B cell (primary cell): ENCODE measurements at regions of chr13 and their contacts with region 1.

Region 1: DNA sequence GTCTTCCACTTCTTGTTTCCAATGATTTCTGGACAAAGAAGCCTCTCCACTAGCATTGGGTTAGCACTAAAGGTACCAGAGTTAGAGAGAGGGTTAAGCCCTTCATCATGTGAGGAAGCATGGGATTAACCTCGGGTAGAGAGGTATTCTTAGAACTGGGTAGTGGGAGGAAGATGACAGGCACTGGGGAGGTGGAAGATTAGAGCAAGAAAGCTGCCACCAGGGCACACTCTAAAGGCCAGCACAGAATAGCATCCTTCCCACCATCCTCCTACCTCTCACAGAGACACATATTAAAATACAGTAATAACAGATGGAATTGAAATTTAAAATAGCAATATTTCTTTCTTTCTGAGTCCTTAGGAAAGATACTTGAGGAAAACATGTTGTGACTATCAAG is 84.5 kb upstream of the PCDH20 start:
- DNase-seq: no peak
- ATAC-seq: no peak
- H3K4me3 ChIP-seq: no peak overlapping the region
- H3K4me3 Mint-ChIP-seq: no peak overlapping the region
- H3K27ac ChIP-seq: no peak overlapping the region
- H3K27ac Mint-ChIP-seq: no peak overlapping the region
- H3K4me1 ChIP-seq: no peaks in the 10 kb centered on the region
- H3K4me1 Mint-ChIP-seq: no peaks in the 10 kb centered on the region
- H3K27me3 ChIP-seq: no peaks in the 10 kb centered on the region
- H3K27me3 Mint-ChIP-seq: no peaks in the 10 kb centered on the region
- CTCF ChIP-seq: no peak

Region 2: DNA sequence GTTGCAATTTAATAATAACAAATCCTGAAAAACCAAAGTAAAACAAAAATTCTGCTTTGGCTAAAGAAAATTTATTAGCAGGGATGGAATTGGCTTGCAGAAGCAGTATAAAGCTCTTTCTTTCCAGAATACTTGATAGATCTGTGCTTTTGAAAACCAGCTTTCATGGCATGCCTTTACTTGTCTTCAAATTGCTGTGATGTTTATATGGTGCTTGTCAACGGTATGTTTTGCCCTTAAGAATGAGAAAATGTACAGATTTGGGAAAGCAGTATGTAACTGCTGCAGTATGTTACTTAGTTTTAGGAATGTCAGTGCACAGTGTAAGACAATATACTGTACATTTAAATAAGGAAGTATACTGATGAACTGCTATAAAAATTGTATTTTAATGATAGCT is 36.3 kb after region 1 on chr13:
- CTCF ChIA-PET with region 1: no interaction called
- POLR2A ChIA-PET with region 1: no interaction called
- intact Hi-C with region 1: loop called (anchors 1 kb)
- DNase-seq: no peak
- ATAC-seq: no peak
- H3K4me3 ChIP-seq: no peak overlapping the region
- H3K4me3 Mint-ChIP-seq: no peak overlapping the region
- H3K27ac ChIP-seq: no peak overlapping the region
- H3K27ac Mint-ChIP-seq: no peak overlapping the region
- H3K4me1 ChIP-seq: no peaks in the 10 kb centered on the region
- H3K4me1 Mint-ChIP-seq: no peaks in the 10 kb centered on the region
- H3K27me3 ChIP-seq: no peaks in the 10 kb centered on the region
- H3K27me3 Mint-ChIP-seq: no peaks in the 10 kb centered on the region
- CTCF ChIP-seq: no peak